PC-3 (cell line): ENCODE measurements at regions of chr6 and their contacts with region 1.

Region 1: GRCh38 chr6:85096976-85097375 is 332.6 kb upstream of the TBX18 start:
- DNase-seq: no peak
- ATAC-seq: no peak
- H3K4me3 ChIP-seq: no peak overlapping the region
- H3K27ac ChIP-seq: no peak overlapping the region
- H3K4me1 ChIP-seq: no peaks in the 10 kb centered on the region
- H3K27me3 ChIP-seq: no peaks in the 10 kb centered on the region
- CTCF ChIP-seq: no peak

Region 2: DNA sequence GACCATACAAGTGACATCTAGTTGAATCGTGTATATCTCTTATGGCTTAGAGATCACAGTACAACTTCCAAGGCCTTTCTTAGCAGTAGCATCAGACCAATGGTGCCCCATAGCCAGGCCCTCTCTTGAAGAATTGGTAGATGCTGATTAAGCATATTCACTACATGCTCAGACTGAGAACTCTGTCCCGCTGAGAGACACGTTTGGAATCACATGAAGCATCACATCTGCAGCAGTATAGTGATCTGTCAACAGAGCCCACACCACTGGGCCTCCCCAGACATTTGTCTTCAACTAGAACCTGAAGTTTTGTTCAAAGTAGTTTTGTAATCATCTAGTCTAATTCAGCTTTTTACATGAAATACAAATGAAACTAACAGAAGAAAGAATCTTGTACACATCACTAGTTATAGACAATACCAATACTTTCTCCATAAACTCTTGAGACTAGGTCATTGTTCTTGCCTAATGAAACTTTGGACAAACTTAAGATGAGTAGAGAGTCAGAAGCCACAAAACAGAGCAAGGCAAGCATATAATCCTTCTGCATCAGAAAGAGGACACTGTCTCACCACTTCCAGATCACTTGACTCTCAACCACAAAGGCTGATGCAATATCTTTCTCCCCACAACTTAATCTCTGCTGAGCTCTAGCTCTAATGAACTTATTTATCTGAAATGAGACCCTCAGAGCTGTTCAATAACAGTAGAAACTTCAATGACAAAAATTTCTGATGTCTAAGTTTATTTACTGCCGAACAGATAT is 515.3 kb before region 1 on chr6:
- CTCF ChIA-PET with region 1: no interaction called
- POLR2A ChIA-PET with region 1: interaction called, 12 read pairs
- intact Hi-C with region 1: no loop called
- DNase-seq: no peak
- ATAC-seq: no peak
- H3K4me3 ChIP-seq: no peak overlapping the region
- H3K27ac ChIP-seq: no peak overlapping the region
- H3K4me1 ChIP-seq: peaks cover 7% of the 10 kb centered on the region; the same call in 1 of the 2 replicates
- H3K27me3 ChIP-seq: no peaks in the 10 kb centered on the region
- CTCF ChIP-seq: no peak